ENCODE measurements at regions of chr5 and their contacts with region 1.

Region 1: DNA sequence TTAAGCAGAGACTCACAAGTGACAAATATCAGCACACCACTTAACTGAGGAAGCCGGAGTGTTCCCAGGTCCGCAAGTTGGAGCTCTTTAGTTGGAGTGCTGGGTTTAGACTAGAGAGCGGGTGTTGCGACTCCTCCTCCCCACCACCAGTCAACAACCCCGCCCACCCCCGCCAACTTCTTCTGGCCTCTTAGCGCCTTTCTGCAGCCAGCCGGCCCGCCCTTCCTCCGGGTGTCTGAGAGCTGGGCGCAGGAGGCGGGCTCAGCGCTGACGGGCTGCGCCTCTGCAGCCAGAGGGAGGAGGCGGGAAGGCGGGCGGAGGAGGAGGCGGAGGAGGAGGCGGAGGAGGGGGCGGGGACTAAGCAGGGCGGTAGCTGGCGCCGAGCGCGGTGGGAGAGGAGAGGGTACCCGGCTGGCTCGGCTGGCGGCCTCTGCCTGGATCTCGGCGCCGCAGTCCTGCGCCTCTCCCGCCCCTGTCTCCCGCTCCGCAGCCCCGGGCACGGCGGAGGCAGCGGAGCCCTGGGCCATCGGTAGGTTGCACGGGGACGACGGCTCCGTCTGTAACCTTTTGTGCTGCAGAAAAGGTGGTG is at the start of gene MACIR:
- DNase-seq: peak; percentile 88 to 99 (median 92)
- ATAC-seq: peak; percentile 91
- H3K4me3 ChIP-seq: peak within 1 kb of the TSS; percentile 86
- H3K27ac ChIP-seq: peak within 1 kb of the TSS; percentile 83
- H3K4me1 ChIP-seq: peaks cover 12 to 27% of the 10 kb centered on the region in 2 experiments; a peak in 4 of 5 replicates
- H3K27me3 ChIP-seq: no peaks in the 10 kb centered on the region
- CTCF ChIP-seq: peak in 2 of 3 experiments; percentile 8 to 24; a peak in 2 of 6 replicates
- EP300 ChIP-seq: no peak
- POLR2A ChIP-seq: peak; percentile 82
- RAD21 ChIP-seq: 0 out of 4 replicates have a peak, but pooled peaks of 1 of the 2 experiments have one; percentile 9
- polyA plus RNA-seq, gene MACIR: 1.4 to 2.7 TPM

Region 2: GRCh38 chr5:102792705-102793104 is 465.8 kb before region 1 on chr5:
- CTCF ChIA-PET with region 1: no interaction called
- POLR2A ChIA-PET with region 1: no interaction called
- in situ Hi-C with region 1: no loop called
- intact Hi-C with region 1: no loop called
- DNase-seq: peak in 2 of 4 experiments; percentile 2 to 6
- ATAC-seq: no peak
- H3K4me3 ChIP-seq: no peak overlapping the region
- H3K27ac ChIP-seq: no peak overlapping the region
- H3K4me1 ChIP-seq: no peaks in the 10 kb centered on the region
- H3K27me3 ChIP-seq: no peaks in the 10 kb centered on the region
- CTCF ChIP-seq: peak; percentile 5 to 39 (median 14); a peak in 2 of 6 replicates
- EP300 ChIP-seq: no peak
- POLR2A ChIP-seq: no peak
- RAD21 ChIP-seq: peak in 1 of 2 experiments; percentile 49; a peak in 2 of 4 replicates

Region 3: DNA sequence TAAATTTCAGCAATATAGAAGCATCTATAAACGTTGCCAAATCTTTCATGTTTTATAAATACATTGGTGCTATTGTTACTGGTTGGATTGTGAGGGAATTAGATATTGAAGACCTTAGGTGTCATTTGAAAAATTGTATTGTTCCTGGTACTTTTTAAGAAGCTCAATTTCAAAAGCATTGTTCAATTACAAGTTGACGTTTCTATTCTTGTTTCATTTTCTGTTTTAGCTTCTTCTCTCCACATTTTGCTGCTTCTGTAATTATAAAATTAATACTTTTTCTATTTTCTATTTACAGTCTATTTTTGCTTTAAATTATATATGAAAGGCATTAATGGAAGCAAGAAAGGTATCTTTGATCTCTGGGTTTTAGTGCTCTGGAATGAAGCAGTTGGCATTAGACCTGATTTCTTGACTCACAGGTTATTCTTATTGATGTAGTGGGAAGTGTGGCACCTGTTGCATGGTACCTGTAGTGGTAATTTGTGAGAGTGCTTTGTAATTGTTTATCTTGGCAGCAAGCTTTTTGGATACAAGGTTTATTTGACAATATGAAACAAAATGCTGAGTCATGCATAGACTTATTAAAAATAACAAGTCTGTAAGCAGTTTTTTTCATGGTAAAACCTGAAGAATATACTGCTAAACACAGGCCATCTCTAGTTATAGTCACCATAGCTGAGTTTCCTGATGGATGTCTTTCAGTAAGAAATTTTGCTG is 13.3 kb after region 1 on chr5:
- CTCF ChIA-PET with region 1: no interaction called
- POLR2A ChIA-PET with region 1: interaction called, 22 read pairs
- in situ Hi-C with region 1: no loop called
- intact Hi-C with region 1: no loop called
- DNase-seq: no peak
- ATAC-seq: no peak
- H3K4me3 ChIP-seq: no peak overlapping the region
- H3K27ac ChIP-seq: peak overlapping the region; percentile 42; the same call in 1 of the 3 replicates
- H3K4me1 ChIP-seq: peaks cover 0 to 25% of the 10 kb centered on the region in 2 experiments; a peak in 3 of 5 replicates
- H3K27me3 ChIP-seq: no peaks in the 10 kb centered on the region
- CTCF ChIP-seq: no peak
- EP300 ChIP-seq: no peak
- POLR2A ChIP-seq: no peak
- RAD21 ChIP-seq: no peak

Region 4: GRCh38 chr5:103480246-103480645 is 221.8 kb after region 1 on chr5:
- CTCF ChIA-PET with region 1: no interaction called
- POLR2A ChIA-PET with region 1: no interaction called
- in situ Hi-C with region 1: no loop called
- intact Hi-C with region 1: no loop called
- DNase-seq: no peak
- ATAC-seq: no peak
- H3K4me3 ChIP-seq: no peak overlapping the region
- H3K27ac ChIP-seq: no peak overlapping the region
- H3K4me1 ChIP-seq: no peaks in the 10 kb centered on the region
- H3K27me3 ChIP-seq: no peaks in the 10 kb centered on the region; a peak in 1 of 5 replicates
- CTCF ChIP-seq: no peak
- EP300 ChIP-seq: no peak
- POLR2A ChIP-seq: no peak
- RAD21 ChIP-seq: no peak

Region 5: GRCh38 chr5:103562453-103563157 is 304.1 kb after region 1 on chr5 and contains the start of gene NUDT12:
- CTCF ChIA-PET with region 1: no interaction called
- POLR2A ChIA-PET with region 1: no interaction called
- in situ Hi-C with region 1: no loop called
- intact Hi-C with region 1: loop called (anchors 10 kb)
- DNase-seq: peak; percentile 82 to 90 (median 89)
- ATAC-seq: peak; percentile 95
- H3K4me3 ChIP-seq: peak within 1 kb of the TSS; percentile 85
- H3K27ac ChIP-seq: peak within 1 kb of the TSS; percentile 91
- H3K4me1 ChIP-seq: peaks cover 0 to 7% of the 10 kb centered on the region in 2 experiments; a peak in 3 of 5 replicates
- H3K27me3 ChIP-seq: no peaks in the 10 kb centered on the region
- CTCF ChIP-seq: no peak
- EP300 ChIP-seq: no peak
- POLR2A ChIP-seq: peak; percentile 83
- RAD21 ChIP-seq: no peak
- polyA plus RNA-seq, gene NUDT12: 21.0 to 21.5 TPM